ENCODE measurements at regions of chr6 and their contacts with region 1.

Region 1: DNA sequence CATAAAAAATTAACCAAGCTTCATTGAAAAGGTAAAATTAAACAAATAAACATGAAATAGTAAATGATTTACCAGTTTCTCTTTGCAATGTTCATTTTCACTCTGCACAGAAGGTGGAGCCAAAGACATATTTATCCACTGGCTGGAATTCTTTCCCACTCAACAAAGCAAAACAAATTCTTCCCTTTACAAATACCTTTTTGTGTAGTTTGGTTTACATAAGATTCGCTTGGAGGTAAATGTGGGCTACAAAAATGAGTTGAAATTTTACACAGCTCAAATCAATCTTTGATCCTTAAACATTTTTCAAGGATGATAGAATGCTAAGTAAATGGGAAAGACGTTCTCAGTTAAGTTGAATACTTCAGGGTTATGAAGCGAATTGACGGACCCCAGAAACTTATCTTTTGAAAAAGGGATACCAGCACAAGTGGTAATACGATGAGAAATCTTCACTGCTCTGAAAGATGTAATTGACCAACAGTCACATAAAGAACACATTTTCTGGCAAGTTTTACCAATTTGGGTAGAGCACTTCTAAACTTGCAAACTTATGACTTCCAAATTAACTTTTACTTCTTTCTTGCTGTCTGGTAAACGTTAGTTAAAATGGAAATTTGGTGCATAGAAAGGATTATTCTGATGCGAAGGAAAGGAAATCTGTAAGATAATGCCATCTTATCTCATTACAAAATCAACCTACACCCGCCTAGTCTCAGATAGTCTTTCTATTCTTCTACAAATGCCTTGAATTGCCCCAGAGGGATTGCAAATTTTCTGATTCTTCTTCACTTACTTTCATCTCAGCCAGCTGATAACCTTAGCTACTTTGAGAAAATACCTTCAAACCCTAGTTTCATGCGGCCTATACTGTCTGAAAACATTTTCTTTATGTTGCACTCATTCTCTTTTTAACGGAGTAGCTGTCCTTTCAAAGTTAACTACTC is 4.7 kb upstream of the GJA1 start:
- DNase-seq: no peak
- ATAC-seq: peak in 1 of 4 donors; percentile 37
- H3K4me3 ChIP-seq: peak overlapping the region in 1 of 12 donors; percentile 4
- H3K27ac ChIP-seq: peak overlapping the region in 3 of 12 donors; percentile 23 to 44 (median 24)
- H3K4me1 ChIP-seq: peaks cover 0 to 13% (median 1%) of the 10 kb centered on the region in 12 donors
- H3K27me3 ChIP-seq: no peaks in the 10 kb centered on the region
- CTCF ChIP-seq: peak; percentile 48 to 85 (median 78)
- POLR2A ChIP-seq: no peak

Region 2: GRCh38 chr6:121584586-121585369 is 154.0 kb after region 1 on chr6:
- intact Hi-C with region 1: loop called in 4 of 10 experiments (anchors 5 to 10 kb)
- DNase-seq: no peak
- ATAC-seq: peak; percentile 58 to 79 (median 71)
- H3K4me3 ChIP-seq: no peak overlapping the region
- H3K27ac ChIP-seq: peak overlapping the region in 10 of 12 donors; percentile 37 to 64 (median 54)
- H3K4me1 ChIP-seq: peaks cover 0 to 23% (median 8%) of the 10 kb centered on the region in 12 donors
- H3K27me3 ChIP-seq: no peaks in the 10 kb centered on the region
- CTCF ChIP-seq: no peak
- POLR2A ChIP-seq: no peak

Region 3: DNA sequence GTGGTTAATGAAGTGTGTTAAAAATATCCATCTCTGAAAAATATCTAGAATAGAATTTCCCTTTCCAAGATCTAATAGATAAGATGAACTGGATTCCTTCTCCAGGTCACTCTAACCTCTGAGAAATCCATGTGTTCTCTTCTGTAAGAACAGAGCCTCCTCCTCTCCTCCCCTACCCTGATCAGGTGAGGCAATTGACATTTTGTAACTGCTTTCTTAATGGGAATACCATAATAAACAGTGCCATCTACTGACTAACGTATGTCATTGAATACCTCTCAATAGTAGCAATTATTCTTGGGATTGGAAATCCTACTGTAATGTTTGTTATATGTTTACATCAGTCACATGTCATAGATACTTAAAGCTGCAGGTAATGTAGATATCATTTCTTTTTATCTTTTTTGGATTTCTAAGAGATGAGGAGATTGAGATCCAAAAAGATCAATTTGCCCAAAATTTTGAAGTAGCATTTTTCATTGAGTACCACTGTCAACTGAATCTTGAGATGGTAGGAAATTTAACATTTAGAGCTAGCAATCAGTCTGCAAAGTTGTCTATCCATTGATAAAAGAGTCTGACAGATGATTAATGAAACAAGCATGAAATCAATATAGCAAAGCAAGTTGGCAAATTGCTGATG is 602.9 kb after region 1 on chr6:
- intact Hi-C with region 1: loop called in 9 of 10 experiments (anchors 1 to 5 kb)
- DNase-seq: no peak
- ATAC-seq: peak; percentile 71 to 90 (median 86)
- H3K4me3 ChIP-seq: no peak overlapping the region
- H3K27ac ChIP-seq: peak overlapping the region in 3 of 12 donors; percentile 6 to 30 (median 9)
- H3K4me1 ChIP-seq: peaks cover 0 to 8% (median 0%) of the 10 kb centered on the region in 12 donors
- H3K27me3 ChIP-seq: no peaks in the 10 kb centered on the region
- CTCF ChIP-seq: peak; percentile 48 to 77 (median 63)
- POLR2A ChIP-seq: no peak

Region 4: GRCh38 chr6:122289762-122290539 is 859.2 kb after region 1 on chr6:
- intact Hi-C with region 1: loop called in 3 of 10 experiments (anchors 5 to 10 kb)
- DNase-seq: no peak
- ATAC-seq: no peak
- H3K4me3 ChIP-seq: no peak overlapping the region
- H3K27ac ChIP-seq: no peak overlapping the region
- H3K4me1 ChIP-seq: peaks cover 0 to 4% (median 0%) of the 10 kb centered on the region in 12 donors
- H3K27me3 ChIP-seq: no peaks in the 10 kb centered on the region
- CTCF ChIP-seq: peak in 8 of 12 donors; percentile 13 to 48 (median 35)
- POLR2A ChIP-seq: no peak

Region 5: DNA sequence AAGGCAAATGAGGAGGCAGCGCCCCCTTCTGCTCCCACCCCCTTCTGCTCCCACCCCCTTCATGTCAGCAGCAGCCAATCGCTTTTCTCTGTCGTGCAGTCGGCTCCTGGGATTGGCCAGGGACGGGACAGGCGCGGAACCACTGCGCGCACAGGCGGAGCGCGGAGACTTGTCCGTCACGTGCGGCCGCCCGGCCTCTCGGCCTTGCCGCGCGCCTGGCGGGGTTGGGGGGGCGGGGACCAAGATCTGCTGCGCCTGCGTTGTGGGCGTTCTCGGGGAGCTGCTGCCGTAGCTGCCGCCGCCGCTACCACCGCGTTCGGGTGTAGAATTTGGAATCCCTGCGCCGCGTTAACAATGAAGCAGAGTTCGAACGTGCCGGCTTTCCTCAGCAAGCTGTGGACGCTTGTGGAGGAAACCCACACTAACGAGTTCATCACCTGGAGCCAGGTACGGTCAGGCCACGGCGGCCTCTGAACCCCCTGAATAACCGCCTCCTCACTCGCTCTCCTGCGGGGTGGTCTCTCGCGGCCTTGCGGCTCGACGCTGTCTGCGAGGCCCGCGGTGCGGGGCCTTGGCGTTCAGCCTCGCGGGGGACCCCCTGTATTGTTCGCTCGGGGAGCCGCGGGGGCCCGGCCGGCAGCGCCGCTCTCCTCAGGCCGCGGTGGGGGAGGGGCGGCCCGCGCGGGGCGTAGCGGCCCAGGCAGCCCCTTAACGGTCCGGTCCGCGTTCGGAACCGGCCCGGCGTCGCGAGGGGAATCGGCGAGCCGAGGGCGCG is 968.8 kb after region 1 on chr6 and contains the start of gene HSF2:
- intact Hi-C with region 1: loop called in 1 of 10 experiments (anchors 10 kb)
- DNase-seq: peak; percentile 97 to 98 (median 97)
- ATAC-seq: peak; percentile 99 to 100 (median 100)
- H3K4me3 ChIP-seq: peak within 1 kb of the TSS; percentile 78 to 98 (median 94)
- H3K27ac ChIP-seq: peak within 1 kb of the TSS; percentile 50 to 93 (median 86)
- H3K4me1 ChIP-seq: peaks cover 0 to 41% (median 19%) of the 10 kb centered on the region in 12 donors
- H3K27me3 ChIP-seq: no peaks in the 10 kb centered on the region
- CTCF ChIP-seq: peak in 5 of 12 donors; percentile 34 to 56 (median 41)
- POLR2A ChIP-seq: no peak
- total RNA-seq, gene HSF2: 18.3 to 34.2 (median 23.1) TPM